CD14-positive monocyte (primary cell): ENCODE measurements at regions of chr3 and their contacts with region 1.

Region 1: GRCh38 chr3:10224784-10225665 is 23.2 kb upstream of the TATDN2 start:
- DNase-seq: peak; percentile 79 to 90 (median 89)
- H3K4me3 ChIP-seq: no peak overlapping the region
- H3K4me3 Mint-ChIP-seq: peak overlapping the region in 1 of 2 donors; percentile 46
- H3K27ac ChIP-seq: peak overlapping the region in 1 of 2 donors; percentile 71
- H3K27ac Mint-ChIP-seq: peak overlapping the region; percentile 84 to 91 (median 85)
- H3K4me1 ChIP-seq: peaks cover 51 to 65% of the 10 kb centered on the region in 2 donors
- H3K4me1 Mint-ChIP-seq: peaks cover 69% of the 10 kb centered on the region
- H3K27me3 ChIP-seq: no peaks in the 10 kb centered on the region
- H3K27me3 Mint-ChIP-seq: peaks cover 0 to 2% (median 0%) of the 10 kb centered on the region in 3 donors
- CTCF ChIP-seq: peak; percentile 85

Region 2: DNA sequence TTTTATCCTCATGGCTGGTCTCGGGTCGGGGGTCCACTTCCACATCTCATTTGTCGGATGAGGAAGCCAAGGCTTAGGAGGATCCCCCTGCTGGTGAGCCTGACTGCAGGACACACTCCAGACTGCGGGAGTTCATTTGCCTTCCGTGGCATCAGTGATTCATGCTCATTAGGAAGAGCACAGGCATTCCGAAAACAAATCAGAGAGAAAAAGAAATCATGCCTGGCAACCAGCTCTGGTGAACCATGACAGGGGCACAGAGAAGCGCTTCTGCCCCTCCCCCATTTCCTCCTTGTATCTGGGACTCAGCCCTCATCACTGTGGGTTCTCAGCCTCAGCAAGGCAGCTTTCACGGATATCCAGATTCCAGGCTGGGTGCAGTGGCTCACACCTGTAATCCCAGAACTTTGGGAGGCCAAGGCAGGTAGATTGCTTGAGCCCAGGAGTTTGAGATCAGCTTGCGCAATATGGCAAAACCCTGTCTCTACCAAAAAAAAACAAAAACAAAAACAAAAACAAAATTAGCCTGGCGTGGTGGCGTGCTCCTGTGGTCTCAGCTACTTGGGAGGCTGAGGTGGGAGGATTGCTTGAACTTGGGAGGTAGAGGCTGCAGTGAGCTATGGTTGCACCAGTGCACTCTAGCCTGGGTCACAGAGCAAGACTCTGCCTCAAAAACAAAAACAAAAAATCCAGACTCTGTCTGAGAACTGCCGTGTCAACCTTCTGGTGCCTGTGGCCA is 31.9 kb before region 1 on chr3:
- intact Hi-C with region 1: loop called in 1 of 2 experiments (anchors 1 kb)
- DNase-seq: peak; percentile 75 to 92 (median 80)
- H3K4me3 ChIP-seq: no peak overlapping the region
- H3K4me3 Mint-ChIP-seq: no peak overlapping the region
- H3K27ac ChIP-seq: peak overlapping the region in 1 of 2 donors; percentile 81
- H3K27ac Mint-ChIP-seq: peak overlapping the region; percentile 81 to 97 (median 93)
- H3K4me1 ChIP-seq: peaks cover 83 to 88% of the 10 kb centered on the region in 2 donors
- H3K4me1 Mint-ChIP-seq: peaks cover 86% of the 10 kb centered on the region
- H3K27me3 ChIP-seq: no peaks in the 10 kb centered on the region
- H3K27me3 Mint-ChIP-seq: peaks cover 0 to 7% (median 0%) of the 10 kb centered on the region in 3 donors
- CTCF ChIP-seq: peak; percentile 51